Posterior cingulate gyrus (tissue), 11 donors: ENCODE measurements at regions of chr2 and their contacts with region 1.

Region 1: DNA sequence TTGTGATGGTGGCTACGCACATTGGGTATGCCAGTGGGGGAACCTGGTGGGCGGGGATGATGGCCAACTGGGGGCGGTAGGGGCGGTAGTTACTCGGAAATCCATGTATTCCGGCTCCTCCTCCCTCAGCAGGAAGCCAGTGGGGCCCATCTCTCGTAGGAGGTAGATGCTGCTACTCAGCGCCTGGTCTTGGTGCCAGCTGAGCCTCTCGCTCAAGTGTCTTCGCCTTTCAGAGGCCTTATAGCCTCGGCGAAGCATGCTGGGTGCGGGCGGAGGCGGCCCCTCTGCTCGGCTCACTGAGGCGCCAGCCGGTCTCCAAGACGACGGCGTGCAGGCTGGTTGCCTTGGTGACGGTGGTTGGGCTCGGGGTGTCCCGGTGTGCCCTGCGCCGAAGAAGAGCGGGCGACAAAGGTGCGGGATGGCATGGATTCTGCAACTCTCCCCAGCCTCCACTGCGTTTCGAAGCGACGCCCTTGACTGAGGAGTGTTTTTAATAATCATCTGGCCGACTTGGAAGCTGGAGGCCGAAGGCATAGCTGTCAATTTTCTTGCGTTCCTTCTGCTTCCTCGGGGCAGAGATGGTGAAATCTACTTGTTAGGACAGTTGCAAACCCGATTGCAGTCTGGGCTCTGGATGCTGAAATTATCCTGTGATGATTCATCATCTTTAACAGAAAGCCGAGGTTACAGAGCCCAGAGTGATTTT is at the start of gene ZSWIM2:
- DNase-seq: peak; percentile 51 to 98 (median 82)

Region 2: GRCh38 chr2:186695081-186695756 is 153.8 kb before region 1 on chr2:
- intact Hi-C with region 1: loop called (anchors 10 kb)
- DNase-seq: peak in 2 of 10 donors; percentile 62 to 80